ENCODE measurements at regions of chr1 and their contacts with region 1.

Region 1: DNA sequence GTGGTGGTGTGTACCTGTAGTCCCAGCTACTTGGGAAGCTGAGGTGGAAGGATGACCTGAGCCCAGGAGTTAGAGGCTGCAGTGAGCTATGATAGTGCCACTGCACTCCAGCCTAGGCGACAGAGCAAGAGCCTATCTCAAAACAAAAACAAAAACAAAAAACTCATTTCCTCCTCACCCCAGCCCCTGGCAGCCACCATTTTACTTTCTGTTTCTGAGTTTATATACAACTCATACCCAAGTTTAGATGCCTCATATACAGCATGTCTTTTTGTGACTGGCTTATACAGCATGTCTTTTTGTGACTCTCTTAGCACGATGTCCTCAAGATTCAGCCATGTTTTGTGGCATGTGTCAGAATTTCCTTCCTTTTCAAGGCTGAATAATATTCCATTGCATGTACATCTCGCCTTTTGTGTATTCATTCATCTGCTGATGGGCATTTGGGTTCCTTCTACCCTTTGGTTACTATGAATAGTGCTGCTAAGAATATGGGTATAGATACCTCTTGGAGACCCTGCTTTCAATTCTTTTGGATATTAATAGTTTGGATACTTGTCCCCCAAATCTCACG is 14.7 kb downstream of the COA7 start:
- DNase-seq: no peak
- ATAC-seq: no peak
- H3K4me3 ChIP-seq: no peak overlapping the region
- H3K4me3 Mint-ChIP-seq: no peak overlapping the region
- H3K27ac ChIP-seq: no peak overlapping the region
- H3K27ac Mint-ChIP-seq: peak overlapping the region in 1 of 2 donors; percentile 28
- H3K4me1 ChIP-seq: peaks cover 11% of the 10 kb centered on the region
- H3K4me1 Mint-ChIP-seq: peaks cover 7 to 14% of the 10 kb centered on the region in 2 donors
- H3K27me3 ChIP-seq: no peaks in the 10 kb centered on the region
- H3K27me3 Mint-ChIP-seq: no peaks in the 10 kb centered on the region
- CTCF ChIP-seq: no peak

Region 2: DNA sequence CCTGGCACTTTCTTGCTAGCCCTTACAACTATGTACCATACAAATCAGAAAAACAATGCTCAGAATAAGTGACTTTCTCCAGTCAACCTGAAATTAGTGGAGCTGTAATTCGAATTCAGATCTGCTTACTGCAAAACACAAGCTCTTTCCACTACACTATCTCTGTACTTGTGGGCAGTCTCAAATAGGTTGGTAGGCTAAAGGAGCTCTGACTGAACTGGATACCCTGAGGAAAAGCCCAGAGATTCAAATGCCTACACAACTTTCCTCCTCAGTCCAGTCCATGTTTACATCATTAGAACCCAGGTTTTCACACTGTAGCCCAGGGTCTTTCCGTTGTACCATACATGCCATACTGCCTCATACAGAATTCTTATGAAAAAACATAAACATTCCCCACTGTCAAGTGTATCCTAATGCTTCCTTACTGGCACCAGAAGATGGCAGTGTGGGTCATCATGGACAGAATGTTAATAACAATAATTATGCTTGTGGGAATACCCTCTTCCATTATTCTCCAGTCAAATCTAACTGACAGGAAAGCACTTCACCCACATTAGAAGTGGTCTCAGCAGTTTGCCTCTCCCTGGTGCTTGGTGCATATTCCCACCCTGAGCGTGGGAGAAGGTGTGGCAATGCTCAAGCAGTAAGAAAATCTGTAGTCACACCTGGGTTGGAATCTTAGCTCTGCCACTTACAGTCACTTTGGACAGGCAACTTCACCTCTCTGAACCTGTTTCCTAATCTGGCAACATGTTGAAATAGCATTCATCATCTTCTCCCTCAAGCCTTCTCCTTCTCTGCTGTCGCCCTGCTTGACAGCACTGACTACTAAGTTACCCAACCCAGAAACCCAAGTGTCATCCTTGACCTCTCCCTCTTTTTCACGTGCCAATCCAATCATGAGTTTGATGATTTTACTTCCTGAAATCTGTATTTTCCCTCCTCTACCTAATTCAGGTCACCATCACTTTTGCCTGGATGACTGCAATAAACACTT is 556.0 kb before region 1 on chr1:
- intact Hi-C with region 1: loop called (anchors 5 kb)
- DNase-seq: peak in 1 of 2 donors; percentile 67
- ATAC-seq: peak in 2 of 3 donors; percentile 47 to 48
- H3K4me3 ChIP-seq: no peak overlapping the region
- H3K4me3 Mint-ChIP-seq: no peak overlapping the region
- H3K27ac ChIP-seq: no peak overlapping the region
- H3K27ac Mint-ChIP-seq: no peak overlapping the region
- H3K4me1 ChIP-seq: no peaks in the 10 kb centered on the region
- H3K4me1 Mint-ChIP-seq: no peaks in the 10 kb centered on the region
- H3K27me3 ChIP-seq: no peaks in the 10 kb centered on the region
- H3K27me3 Mint-ChIP-seq: peaks cover 40 to 44% of the 10 kb centered on the region in 2 donors
- CTCF ChIP-seq: peak; percentile 45

Region 3: GRCh38 chr1:52141513-52142219 is 541.8 kb before region 1 on chr1 and contains the start of gene ZFYVE9:
- intact Hi-C with region 1: loop called (anchors 5 kb)
- DNase-seq: peak; percentile 72 to 88
- ATAC-seq: peak; percentile 78 to 89 (median 86)
- H3K4me3 ChIP-seq: peak within 1 kb of the TSS; percentile 16
- H3K4me3 Mint-ChIP-seq: peak within 1 kb of the TSS; percentile 91
- H3K27ac ChIP-seq: no peak within 1 kb of the TSS
- H3K27ac Mint-ChIP-seq: peak within 1 kb of the TSS in 1 of 2 donors; percentile 60
- H3K4me1 ChIP-seq: peaks cover 10% of the 10 kb centered on the region
- H3K4me1 Mint-ChIP-seq: peaks cover 29 to 30% of the 10 kb centered on the region in 2 donors
- H3K27me3 ChIP-seq: peaks cover 8% of the 10 kb centered on the region
- H3K27me3 Mint-ChIP-seq: peaks cover 13 to 23% of the 10 kb centered on the region in 2 donors
- CTCF ChIP-seq: peak; percentile 71
- total RNA-seq, gene ZFYVE9: 1.1 to 2.3 (median 1.8) TPM

Region 4: DNA sequence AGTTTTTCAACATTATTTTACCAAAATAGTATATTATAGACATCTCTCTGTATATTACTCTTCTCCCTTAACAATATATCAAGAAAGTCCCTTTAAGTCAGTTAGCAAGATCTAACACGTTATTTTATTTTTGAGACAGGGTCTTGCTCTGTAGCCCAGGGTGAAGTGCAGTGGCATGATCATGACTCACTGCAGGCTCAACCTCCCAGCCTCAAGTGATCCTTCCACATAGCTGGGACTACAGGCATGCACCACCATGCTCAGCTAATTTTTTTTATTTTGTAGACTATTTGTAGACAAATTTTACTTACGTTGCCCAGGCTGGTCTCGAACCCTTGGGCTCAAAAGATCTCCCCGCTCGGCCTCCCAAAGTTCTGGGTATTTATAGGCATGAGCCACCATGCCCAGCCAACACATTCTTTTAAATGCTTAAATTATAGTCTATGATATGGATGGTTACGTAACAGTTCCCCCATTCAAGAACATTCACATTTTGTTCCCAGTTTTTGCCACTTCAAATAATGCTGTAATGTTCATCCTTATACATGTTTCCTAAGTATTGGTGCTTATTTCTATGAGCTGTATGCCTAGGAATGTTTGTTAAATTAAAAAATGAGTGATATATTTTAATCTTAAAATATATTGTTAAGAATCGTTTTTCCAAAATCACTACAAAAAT is 201.0 kb before region 1 on chr1:
- intact Hi-C with region 1: loop called (anchors 10 kb)
- DNase-seq: no peak
- ATAC-seq: no peak
- H3K4me3 ChIP-seq: no peak overlapping the region
- H3K4me3 Mint-ChIP-seq: no peak overlapping the region
- H3K27ac ChIP-seq: no peak overlapping the region
- H3K27ac Mint-ChIP-seq: no peak overlapping the region
- H3K4me1 ChIP-seq: no peaks in the 10 kb centered on the region
- H3K4me1 Mint-ChIP-seq: no peaks in the 10 kb centered on the region
- H3K27me3 ChIP-seq: no peaks in the 10 kb centered on the region
- H3K27me3 Mint-ChIP-seq: no peaks in the 10 kb centered on the region
- CTCF ChIP-seq: no peak

Region 5: DNA sequence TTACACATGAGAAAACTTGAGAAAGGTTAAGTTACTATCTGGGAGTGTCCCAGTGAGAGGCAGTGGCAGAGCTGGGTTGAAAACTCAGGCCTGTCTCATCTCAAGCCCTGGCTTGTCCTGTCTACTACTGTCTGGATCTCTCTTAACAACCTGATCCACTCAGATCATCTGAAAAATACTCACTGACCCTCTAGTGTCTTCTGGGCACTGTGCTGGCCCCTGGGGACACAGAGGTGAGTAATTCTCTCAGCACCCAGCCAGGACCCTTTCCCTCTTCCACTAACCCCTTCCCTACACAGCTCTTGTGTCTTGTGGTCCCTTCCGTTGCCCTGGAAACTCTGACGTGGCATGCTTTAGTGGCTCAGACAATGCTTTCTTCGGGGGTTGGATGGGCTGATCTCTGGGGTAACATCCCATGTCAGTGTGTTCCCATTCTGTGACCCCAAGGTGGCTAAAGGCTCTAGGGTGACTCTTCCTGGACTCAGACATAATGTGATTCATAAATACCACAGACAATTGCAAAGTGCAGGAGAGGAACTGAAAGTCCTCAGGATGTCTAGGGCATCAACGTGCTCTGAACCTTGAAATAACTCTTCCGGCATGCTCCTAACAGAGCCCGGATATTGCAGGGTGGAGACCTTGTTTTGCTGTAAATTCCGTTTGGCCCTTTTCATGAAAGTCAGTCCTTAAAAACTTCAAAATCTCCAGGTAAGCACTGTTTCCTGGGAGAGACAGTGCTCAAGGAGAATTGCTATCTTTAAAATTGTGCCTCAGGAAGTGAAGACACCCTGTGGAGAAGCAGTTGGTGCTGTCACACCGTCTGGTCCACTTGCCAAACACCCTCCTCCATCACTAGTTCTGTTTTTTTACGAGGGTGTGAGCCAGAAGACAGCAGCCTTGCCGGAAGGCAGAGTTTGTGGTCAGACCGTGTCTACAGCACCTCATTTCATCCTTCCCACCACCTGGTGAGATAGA is 46.4 kb before region 1 on chr1:
- intact Hi-C with region 1: loop called (anchors 10 kb)
- DNase-seq: peak; percentile 56 to 87
- ATAC-seq: peak; percentile 49 to 80 (median 72)
- H3K4me3 ChIP-seq: no peak overlapping the region
- H3K4me3 Mint-ChIP-seq: peak overlapping the region; percentile 82
- H3K27ac ChIP-seq: peak overlapping the region; percentile 97
- H3K27ac Mint-ChIP-seq: peak overlapping the region; percentile 96 to 98
- H3K4me1 ChIP-seq: peaks cover 83% of the 10 kb centered on the region
- H3K4me1 Mint-ChIP-seq: peaks cover 76 to 88% of the 10 kb centered on the region in 2 donors
- H3K27me3 ChIP-seq: no peaks in the 10 kb centered on the region
- H3K27me3 Mint-ChIP-seq: no peaks in the 10 kb centered on the region
- CTCF ChIP-seq: no peak